ENCODE measurements at regions of chr1 and their contacts with region 1.

Region 1: GRCh38 chr1:42035830-42036604 is 117.2 kb upstream of the GUCA2B start:
- DNase-seq: peak; percentile 98
- ATAC-seq: peak; percentile 97

Region 2: DNA sequence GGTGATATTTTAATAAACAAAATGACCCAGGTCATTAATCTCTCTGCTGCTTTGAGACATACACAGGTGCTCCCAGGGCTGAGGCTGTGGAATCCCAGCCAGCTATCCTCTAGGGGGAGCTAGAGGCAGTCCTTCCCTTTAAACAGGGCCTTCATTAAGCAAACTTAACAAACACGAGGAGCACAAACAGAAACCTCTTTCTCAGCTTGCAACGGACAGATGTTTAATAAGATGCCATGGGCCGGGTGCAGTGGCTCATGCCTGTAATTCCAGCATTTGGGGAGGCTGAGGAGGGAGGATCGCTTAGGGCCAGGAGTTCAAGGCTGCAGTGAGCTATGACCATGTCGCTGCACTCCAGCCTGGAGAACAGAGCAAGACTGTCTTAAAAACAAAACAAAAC is 224.0 kb before region 1 on chr1:
- intact Hi-C with region 1: loop called (anchors 2 kb)
- DNase-seq: no peak
- ATAC-seq: no peak

Region 3: GRCh38 chr1:41891199-41891896 is 144.7 kb before region 1 on chr1:
- intact Hi-C with region 1: loop called (anchors 10 kb)
- DNase-seq: no peak
- ATAC-seq: peak; percentile 41

Region 4: DNA sequence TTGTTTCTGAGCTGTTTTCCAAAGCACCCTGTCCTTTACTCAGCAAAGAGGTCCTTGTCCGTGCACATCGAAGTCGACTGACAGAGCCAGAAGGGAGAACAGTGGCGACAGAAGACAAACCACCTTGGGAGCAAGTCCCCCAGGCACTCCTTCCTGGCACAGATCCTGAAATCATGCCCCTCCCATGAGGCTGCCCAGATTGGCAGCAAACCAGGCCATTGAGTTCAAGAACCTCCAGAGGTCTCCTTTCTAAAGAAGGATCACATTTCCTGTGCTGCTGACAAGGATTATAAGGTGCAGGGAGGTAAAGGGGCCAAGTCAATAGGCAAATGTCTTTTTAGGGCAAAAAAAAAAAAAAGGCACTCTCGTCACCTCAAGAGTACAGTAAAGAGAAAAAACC is 32.6 kb before region 1 on chr1:
- intact Hi-C with region 1: no loop called
- DNase-seq: no peak
- ATAC-seq: peak; percentile 24

Region 5: DNA sequence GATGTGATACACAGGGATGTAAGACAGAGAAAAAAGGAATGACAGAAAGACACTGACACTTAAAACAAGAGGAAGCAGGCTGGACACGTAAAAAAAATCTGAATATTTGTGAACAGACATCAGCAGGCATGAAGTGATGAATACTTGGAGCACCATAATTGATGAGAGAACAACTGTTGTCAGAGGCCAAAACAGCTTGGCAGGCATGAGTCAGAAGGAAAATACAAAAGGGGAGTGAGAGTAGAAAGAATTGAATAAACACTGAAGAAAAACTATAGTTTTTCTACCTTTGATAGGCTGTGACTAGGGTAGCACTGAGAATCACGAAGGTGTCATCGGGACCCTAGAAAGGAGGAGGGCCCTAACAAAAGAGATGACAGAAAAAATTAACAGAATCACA is 150.1 kb after region 1 on chr1:
- intact Hi-C with region 1: no loop called
- DNase-seq: no peak
- ATAC-seq: no peak

Measured in Right ventricle myocardium inferior (tissue), 1 donor.